ENCODE measurements at regions of chr6 and their contacts with region 1.

Region 1: DNA sequence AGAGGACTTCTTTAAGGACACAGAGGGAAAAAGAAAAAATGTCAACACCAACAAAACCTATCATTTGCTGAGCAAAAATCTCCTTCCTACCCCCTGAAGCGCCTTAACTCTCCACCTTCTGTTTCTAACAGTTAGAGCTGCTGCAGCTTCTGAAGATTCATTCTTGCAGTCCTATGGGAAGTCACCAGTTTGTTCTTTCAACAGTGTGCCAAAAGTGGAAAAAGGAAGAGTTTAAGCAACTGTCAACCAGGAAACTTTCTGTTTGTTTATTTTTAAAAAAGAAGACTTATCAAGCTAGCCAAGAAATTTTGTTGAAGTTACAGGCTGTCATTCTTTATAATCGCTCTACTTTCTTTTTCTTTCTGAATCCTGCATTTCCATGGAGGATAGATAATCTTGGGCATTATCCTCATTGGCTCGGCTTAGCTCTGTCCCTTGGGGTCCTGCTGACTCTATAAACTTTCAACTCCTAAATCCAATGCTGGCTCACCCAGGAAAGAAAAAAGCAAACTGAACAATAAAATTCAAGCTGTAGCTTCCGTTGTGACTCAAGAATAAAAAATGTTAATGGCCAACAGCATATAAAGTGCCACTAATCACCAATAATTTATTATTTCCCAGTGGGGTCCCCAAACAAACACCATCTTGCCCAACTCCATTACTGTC is 172.8 kb upstream of the CITED2 start:
- DNase-seq: no peak
- H3K4me3 ChIP-seq: no peak overlapping the region
- H3K27ac ChIP-seq: peak overlapping the region in 1 of 2 donors; percentile 24
- H3K4me1 ChIP-seq: peaks cover 2% of the 10 kb centered on the region
- H3K27me3 ChIP-seq: no peaks in the 10 kb centered on the region
- CTCF ChIP-seq: no peak
- POLR2A ChIP-seq: no peak

Region 2: DNA sequence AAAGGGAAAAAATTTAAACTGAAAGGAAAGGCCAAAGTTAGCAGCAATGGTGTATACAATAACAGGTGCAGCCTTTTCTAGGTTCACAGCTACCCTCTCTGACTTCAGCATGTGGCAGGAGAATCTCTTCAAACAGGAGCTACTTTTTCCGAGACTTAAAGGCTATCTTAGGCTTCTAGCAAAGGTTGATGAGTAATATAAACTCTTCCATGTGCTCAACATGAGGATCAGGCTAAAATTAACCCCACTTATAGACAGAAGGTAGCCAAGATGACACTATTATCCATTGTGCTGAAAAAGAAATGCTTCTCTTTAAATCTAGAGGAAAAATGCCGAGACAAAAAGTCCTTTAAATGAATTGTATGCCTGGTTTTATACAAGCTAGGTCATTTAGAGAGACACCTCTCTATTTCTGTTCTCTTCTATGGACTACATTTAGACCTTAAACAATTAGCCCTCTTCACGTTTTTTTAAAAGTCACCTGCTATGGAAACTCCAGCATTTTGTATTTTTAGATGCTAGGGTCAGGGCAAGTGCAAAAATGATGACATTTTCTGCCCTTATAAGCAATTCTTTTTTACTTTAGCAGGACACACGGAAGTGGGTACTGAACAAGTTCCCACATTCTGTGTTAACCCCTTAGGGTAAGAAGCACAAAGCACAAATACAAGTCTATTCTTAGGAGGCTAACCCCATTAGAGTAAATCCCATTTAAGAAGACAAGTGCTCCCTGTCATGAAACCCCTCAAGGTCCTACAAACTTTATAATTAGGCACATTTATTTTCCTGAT is 44.0 kb after region 1 on chr6:
- intact Hi-C with region 1: loop called (anchors 5 kb)
- DNase-seq: no peak
- H3K4me3 ChIP-seq: no peak overlapping the region
- H3K27ac ChIP-seq: peak overlapping the region in 1 of 2 donors; percentile 24
- H3K4me1 ChIP-seq: peaks cover 10% of the 10 kb centered on the region
- H3K27me3 ChIP-seq: no peaks in the 10 kb centered on the region
- CTCF ChIP-seq: no peak
- POLR2A ChIP-seq: no peak

Measured in prostate gland (tissue), 2 donors.